ENCODE measurements at regions of chr12 and their contacts with region 1.

Region 1: GRCh38 chr12:112198120-112198733 is 72.9 kb downstream of the TRAFD1 start:
- DNase-seq: peak; percentile 87
- ATAC-seq: peak; percentile 100
- H3K4me3 Mint-ChIP-seq: no peak overlapping the region
- H3K27ac Mint-ChIP-seq: peak overlapping the region; percentile 86
- H3K4me1 Mint-ChIP-seq: peaks cover 2% of the 10 kb centered on the region; the same call in 1 of the 2 replicates
- H3K27me3 Mint-ChIP-seq: no peaks in the 10 kb centered on the region
- CTCF ChIP-seq: peak; percentile 71

Region 2: DNA sequence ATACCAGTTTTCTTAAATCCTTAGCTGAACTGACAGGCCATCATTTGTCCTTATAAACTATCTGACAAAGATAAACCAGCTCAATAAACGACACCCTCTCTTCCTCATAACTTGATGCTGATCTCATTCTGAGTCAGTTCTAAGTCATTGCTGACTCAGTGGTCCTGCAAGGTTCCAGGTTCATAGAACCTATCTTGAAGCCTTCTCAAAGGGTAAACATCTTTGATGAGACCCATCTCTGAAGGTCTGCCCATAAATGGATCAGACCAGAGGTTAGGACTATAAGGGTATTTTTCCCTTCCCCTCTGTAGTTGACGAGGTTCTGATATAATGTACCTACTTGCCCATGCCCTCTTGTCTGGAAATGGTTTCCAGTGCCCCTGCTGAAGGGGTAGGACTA is 101.6 kb before region 1 on chr12:
- CTCF ChIA-PET with region 1: no interaction called
- POLR2A ChIA-PET with region 1: no interaction called
- DNase-seq: no peak
- ATAC-seq: no peak
- H3K4me3 Mint-ChIP-seq: no peak overlapping the region
- H3K27ac Mint-ChIP-seq: 0 out of 2 replicates have a peak overlapping the region, but pooled peaks have one; percentile 17
- H3K4me1 Mint-ChIP-seq: no peaks in the 10 kb centered on the region
- H3K27me3 Mint-ChIP-seq: no peaks in the 10 kb centered on the region
- CTCF ChIP-seq: no peak

Region 3: DNA sequence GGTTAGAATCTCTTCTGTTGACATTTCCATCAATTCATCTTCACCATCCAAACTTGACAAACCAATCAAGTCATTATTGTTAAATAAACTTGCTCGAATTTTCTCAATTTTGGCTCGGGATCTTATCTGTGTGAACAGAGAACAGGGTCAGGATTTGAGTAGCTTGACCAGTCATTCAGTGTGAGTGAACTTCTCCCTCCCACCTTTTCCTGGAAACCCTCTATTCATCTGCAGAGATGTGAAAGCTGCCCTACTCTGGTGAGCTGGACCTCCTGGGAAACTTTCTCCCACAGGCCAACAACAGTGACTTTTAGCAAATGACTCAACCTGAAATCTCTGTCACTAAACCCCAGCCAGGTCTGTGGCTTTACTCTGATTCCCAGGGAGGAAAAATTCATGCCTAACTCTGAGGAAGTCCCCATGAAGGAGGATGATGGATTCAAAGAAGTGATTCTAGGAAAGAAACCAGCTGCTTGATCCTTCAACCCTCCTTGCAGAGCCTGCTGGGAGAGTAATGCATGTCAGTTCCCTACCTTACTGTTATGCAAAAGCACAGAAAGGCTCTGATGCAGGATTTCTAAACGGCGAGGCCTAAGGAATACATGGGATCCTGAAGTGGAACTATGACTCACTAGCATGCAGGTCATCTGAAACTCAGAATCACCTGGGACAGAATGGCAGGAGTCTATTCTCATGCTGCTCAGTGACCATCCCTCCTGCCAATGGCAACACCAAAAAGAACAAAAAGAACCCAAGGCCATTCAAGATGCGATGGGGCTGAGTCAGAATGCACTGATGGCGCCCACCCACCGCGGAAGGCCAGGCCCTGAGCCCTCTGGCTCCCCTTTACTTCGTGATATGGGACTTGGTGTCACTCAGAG is 14.8 kb before region 1 on chr12:
- CTCF ChIA-PET with region 1: interaction called, 15 read pairs
- POLR2A ChIA-PET with region 1: no interaction called
- DNase-seq: no peak
- ATAC-seq: peak; percentile 58
- H3K4me3 Mint-ChIP-seq: no peak overlapping the region
- H3K27ac Mint-ChIP-seq: peak overlapping the region; percentile 82
- H3K4me1 Mint-ChIP-seq: peaks cover 17% of the 10 kb centered on the region
- H3K27me3 Mint-ChIP-seq: no peaks in the 10 kb centered on the region
- CTCF ChIP-seq: no peak

Region 4: DNA sequence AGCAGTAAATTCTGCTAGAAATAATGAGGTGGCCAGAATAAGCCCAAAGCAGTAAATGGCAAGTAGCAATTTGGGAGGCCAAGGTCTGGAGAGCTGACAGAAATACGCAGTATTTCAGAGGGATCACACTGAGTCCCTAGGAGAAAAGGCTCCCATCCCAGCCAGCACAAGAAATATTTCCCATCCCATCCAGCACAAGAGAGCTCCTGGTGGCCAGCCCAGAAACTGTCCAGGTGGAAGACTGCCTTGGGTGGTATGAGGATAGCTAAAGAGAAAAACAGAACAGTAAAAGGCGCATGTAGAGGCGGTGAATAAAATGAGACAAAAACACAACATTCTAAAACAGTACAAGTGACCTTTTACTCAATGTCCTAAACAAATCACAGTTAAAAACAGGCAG is 63.3 kb after region 1 on chr12:
- CTCF ChIA-PET with region 1: interaction called, 23 read pairs
- POLR2A ChIA-PET with region 1: no interaction called
- DNase-seq: peak; percentile 53
- ATAC-seq: peak; percentile 95
- H3K4me3 Mint-ChIP-seq: no peak overlapping the region
- H3K27ac Mint-ChIP-seq: peak overlapping the region; percentile 75; the same call in 1 of the 2 replicates
- H3K4me1 Mint-ChIP-seq: peaks cover 12% of the 10 kb centered on the region
- H3K27me3 Mint-ChIP-seq: no peaks in the 10 kb centered on the region
- CTCF ChIP-seq: no peak

Region 5: GRCh38 chr12:112386726-112387125 is 188.5 kb after region 1 on chr12:
- CTCF ChIA-PET with region 1: interaction called, 126 read pairs
- POLR2A ChIA-PET with region 1: interaction called, 6 read pairs
- DNase-seq: no peak
- ATAC-seq: no peak
- H3K4me3 Mint-ChIP-seq: no peak overlapping the region
- H3K27ac Mint-ChIP-seq: no peak overlapping the region
- H3K4me1 Mint-ChIP-seq: peaks cover 11% of the 10 kb centered on the region
- H3K27me3 Mint-ChIP-seq: peaks cover 11% of the 10 kb centered on the region
- CTCF ChIP-seq: no peak

Region 6: DNA sequence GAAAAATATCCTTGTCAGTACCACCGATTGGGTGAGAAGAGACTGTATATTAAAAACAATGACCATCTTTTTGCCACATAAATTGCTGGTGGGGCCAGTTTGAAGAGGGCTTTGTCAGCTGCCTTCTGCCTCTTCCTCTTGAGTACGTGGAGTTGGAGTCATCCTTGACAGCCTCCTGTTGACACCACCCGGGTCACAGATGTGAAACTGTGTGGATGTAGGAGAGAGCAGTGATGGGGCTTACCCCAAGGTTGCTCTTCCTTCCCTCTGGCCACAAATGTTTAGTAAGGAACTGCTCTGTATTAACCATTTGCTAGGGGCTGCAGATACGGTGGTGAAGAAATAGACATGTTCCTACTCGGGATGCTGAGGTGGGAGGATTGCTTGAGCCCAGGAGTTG is 232.7 kb after region 1 on chr12:
- CTCF ChIA-PET with region 1: no interaction called
- POLR2A ChIA-PET with region 1: no interaction called
- DNase-seq: no peak
- ATAC-seq: no peak
- H3K4me3 Mint-ChIP-seq: no peak overlapping the region
- H3K27ac Mint-ChIP-seq: no peak overlapping the region
- H3K4me1 Mint-ChIP-seq: no peaks in the 10 kb centered on the region
- H3K27me3 Mint-ChIP-seq: no peaks in the 10 kb centered on the region
- CTCF ChIP-seq: no peak

Measured in WTC11 (cell line).